ENCODE measurements at regions of chr1 and their contacts with region 1.

Region 1: GRCh38 chr1:241186716-241187115 is 170.3 kb downstream of the RGS7 start:
- DNase-seq: no peak
- H3K4me3 Mint-ChIP-seq: no peak overlapping the region
- H3K27ac Mint-ChIP-seq: no peak overlapping the region
- H3K4me1 Mint-ChIP-seq: peaks cover 34% of the 10 kb centered on the region
- H3K27me3 Mint-ChIP-seq: no peaks in the 10 kb centered on the region
- CTCF ChIP-seq: no peak

Region 2: GRCh38 chr1:240888787-240889048 is 298.0 kb before region 1 on chr1:
- CTCF ChIA-PET with region 1: no interaction called
- intact Hi-C with region 1: no loop called
- DNase-seq: no peak
- H3K4me3 Mint-ChIP-seq: no peak overlapping the region
- H3K27ac Mint-ChIP-seq: no peak overlapping the region
- H3K4me1 Mint-ChIP-seq: no peaks in the 10 kb centered on the region
- H3K27me3 Mint-ChIP-seq: no peaks in the 10 kb centered on the region
- CTCF ChIP-seq: no peak

Region 3: DNA sequence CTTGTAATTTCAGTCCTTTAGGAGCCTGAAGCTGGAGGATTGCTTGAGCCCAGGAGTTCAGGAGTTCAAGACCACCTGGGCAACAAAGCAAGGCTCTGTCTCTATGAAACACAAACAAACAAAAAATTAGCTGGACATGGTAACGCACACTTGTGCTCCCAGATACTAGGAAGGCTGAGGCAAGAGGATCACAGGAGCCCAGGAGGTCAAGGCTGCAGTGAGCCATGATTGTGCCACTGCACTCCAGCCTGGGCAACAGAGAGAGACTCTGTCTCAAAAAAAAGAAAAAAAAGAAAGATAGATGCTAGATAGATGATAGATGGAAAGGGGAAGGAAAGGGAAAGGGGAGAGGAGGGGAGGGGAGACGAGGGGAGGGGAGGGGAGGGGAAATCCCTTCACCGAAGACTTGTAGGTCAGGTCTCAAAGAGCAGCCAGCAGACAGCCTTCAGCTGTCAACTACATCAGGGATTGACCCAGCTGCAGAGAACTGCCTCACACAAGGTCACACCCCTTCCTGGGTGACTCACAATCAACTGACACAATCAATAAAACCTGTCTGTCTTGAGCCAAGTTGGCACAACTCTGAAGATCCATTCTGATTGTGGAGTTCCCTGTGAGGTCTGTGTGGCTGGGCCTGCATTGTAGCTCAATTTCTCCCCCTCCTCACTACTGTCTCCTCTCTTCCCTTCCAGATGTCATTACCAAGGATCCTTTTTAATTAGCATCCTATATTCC is 30.3 kb before region 1 on chr1:
- CTCF ChIA-PET with region 1: interaction called, 5 read pairs
- intact Hi-C with region 1: loop called (anchors 2 kb)
- DNase-seq: peak; percentile 85
- H3K4me3 Mint-ChIP-seq: peak overlapping the region; percentile 45
- H3K27ac Mint-ChIP-seq: peak overlapping the region; percentile 92
- H3K4me1 Mint-ChIP-seq: peaks cover 21% of the 10 kb centered on the region
- H3K27me3 Mint-ChIP-seq: no peaks in the 10 kb centered on the region
- CTCF ChIP-seq: no peak

Measured in Calu3 (cell line).